T-cell (primary cell): ENCODE measurements at regions of chr17 and their contacts with region 1.

Region 1: GRCh38 chr17:4849011-4849536 is 15.9 kb downstream of the MINK1 start:
- DNase-seq: no peak
- ATAC-seq: no peak
- H3K4me3 ChIP-seq: no peak overlapping the region
- H3K4me3 Mint-ChIP-seq: no peak overlapping the region
- H3K27ac ChIP-seq: no peak overlapping the region
- H3K27ac Mint-ChIP-seq: no peak overlapping the region
- H3K4me1 ChIP-seq: peaks cover 0 to 26% of the 10 kb centered on the region in 2 experiments
- H3K4me1 Mint-ChIP-seq: peaks cover 46 to 71% (median 62%) of the 10 kb centered on the region in 3 donors
- H3K27me3 ChIP-seq: no peaks in the 10 kb centered on the region
- H3K27me3 Mint-ChIP-seq: no peaks in the 10 kb centered on the region

Region 2: GRCh38 chr17:4769628-4770027 is 79.4 kb before region 1 on chr17:
- CTCF ChIA-PET with region 1: no interaction called
- POLR2A ChIA-PET with region 1: interaction called in 1 of 2 experiments, 10 read pairs
- DNase-seq: no peak
- ATAC-seq: no peak
- H3K4me3 ChIP-seq: no peak overlapping the region
- H3K4me3 Mint-ChIP-seq: no peak overlapping the region
- H3K27ac ChIP-seq: no peak overlapping the region
- H3K27ac Mint-ChIP-seq: no peak overlapping the region
- H3K4me1 ChIP-seq: peaks cover 0 to 11% of the 10 kb centered on the region in 2 experiments
- H3K4me1 Mint-ChIP-seq: peaks cover 7 to 9% (median 7%) of the 10 kb centered on the region in 3 donors
- H3K27me3 ChIP-seq: peaks cover 0 to 27% of the 10 kb centered on the region in 2 experiments
- H3K27me3 Mint-ChIP-seq: peaks cover 4 to 5% of the 10 kb centered on the region in 2 donors

Region 3: DNA sequence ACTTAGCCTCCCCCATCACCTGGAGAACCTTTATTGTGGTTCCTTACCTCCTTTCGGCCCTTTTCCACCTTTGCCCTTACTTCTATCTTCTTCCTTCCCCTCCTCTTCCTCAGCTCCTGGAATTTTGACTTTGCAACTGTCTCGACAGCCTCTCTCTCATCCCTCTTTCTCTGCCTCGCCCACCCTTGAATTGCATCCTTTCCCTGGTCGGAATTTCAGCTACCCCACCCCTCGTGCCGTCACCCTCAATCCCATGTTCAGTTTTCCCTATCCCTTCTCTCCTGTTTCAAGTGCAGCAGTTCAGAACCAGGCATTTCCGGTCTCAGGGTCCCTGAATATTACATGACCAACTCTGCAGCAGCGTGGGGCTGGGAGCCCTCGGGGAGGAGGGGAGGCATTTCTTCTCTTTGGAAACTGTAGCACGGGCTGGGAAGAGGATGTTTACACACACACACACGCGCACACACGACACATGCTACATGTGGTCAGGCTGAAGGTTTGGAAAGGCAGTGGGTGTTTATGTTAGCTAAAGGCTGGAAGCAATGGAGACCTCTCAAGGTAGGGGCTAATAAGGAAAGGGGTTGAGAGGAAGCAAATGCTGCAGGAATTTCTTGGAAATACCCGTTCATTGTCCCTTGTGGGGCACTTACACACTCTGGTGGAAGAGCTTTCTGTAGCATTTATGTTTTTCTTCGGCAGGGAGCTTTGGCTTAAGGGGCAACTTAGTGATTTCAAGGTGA is 15.0 kb before region 1 on chr17:
- CTCF ChIA-PET with region 1: no interaction called
- POLR2A ChIA-PET with region 1: interaction called in 1 of 2 experiments, 13 read pairs
- DNase-seq: peak in 3 of 35 experiments; percentile 7 to 29 (median 16)
- ATAC-seq: no peak
- H3K4me3 ChIP-seq: peak overlapping the region; percentile 73 to 85
- H3K4me3 Mint-ChIP-seq: peak overlapping the region; percentile 91 to 92 (median 91)
- H3K27ac ChIP-seq: peak overlapping the region; percentile 57
- H3K27ac Mint-ChIP-seq: peak overlapping the region; percentile 84 to 86
- H3K4me1 ChIP-seq: peaks cover 14 to 35% of the 10 kb centered on the region in 2 experiments
- H3K4me1 Mint-ChIP-seq: peaks cover 41 to 50% (median 47%) of the 10 kb centered on the region in 3 donors
- H3K27me3 ChIP-seq: no peaks in the 10 kb centered on the region
- H3K27me3 Mint-ChIP-seq: no peaks in the 10 kb centered on the region